PC-3 (cell line): ENCODE measurements at regions of chr12 and their contacts with region 1.

Region 1: GRCh38 chr12:75236123-75236570 is 26.5 kb upstream of the KCNC2 start:
- DNase-seq: peak; percentile 97
- ATAC-seq: peak; percentile 98
- H3K4me3 ChIP-seq: no peak overlapping the region
- H3K27ac ChIP-seq: no peak overlapping the region
- H3K4me1 ChIP-seq: peaks cover 17% of the 10 kb centered on the region
- H3K27me3 ChIP-seq: no peaks in the 10 kb centered on the region
- CTCF ChIP-seq: no peak

Region 2: GRCh38 chr12:75196865-75197264 is 39.3 kb before region 1 on chr12:
- CTCF ChIA-PET with region 1: no interaction called
- POLR2A ChIA-PET with region 1: no interaction called
- intact Hi-C with region 1: loop called (anchors 2 kb)
- DNase-seq: peak; percentile 92
- ATAC-seq: peak; percentile 93
- H3K4me3 ChIP-seq: no peak overlapping the region
- H3K27ac ChIP-seq: no peak overlapping the region
- H3K4me1 ChIP-seq: peaks cover 15% of the 10 kb centered on the region
- H3K27me3 ChIP-seq: no peaks in the 10 kb centered on the region
- CTCF ChIP-seq: no peak

Region 3: GRCh38 chr12:75225546-75225945 is 10.6 kb before region 1 on chr12:
- CTCF ChIA-PET with region 1: no interaction called
- POLR2A ChIA-PET with region 1: interaction called, 19 read pairs
- intact Hi-C with region 1: no loop called
- DNase-seq: peak; percentile 30
- ATAC-seq: peak; percentile 71
- H3K4me3 ChIP-seq: no peak overlapping the region
- H3K27ac ChIP-seq: no peak overlapping the region
- H3K4me1 ChIP-seq: peaks cover 9% of the 10 kb centered on the region
- H3K27me3 ChIP-seq: no peaks in the 10 kb centered on the region
- CTCF ChIP-seq: no peak